ENCODE measurements at regions of chr6 and their contacts with region 1.

Region 1: GRCh38 chr6:1987640-1988039 is 257.8 kb downstream of the GMDS start:
- DNase-seq: peak; percentile 32
- H3K4me3 ChIP-seq: no peak overlapping the region
- H3K27ac ChIP-seq: no peak overlapping the region
- H3K27me3 ChIP-seq: no peaks in the 10 kb centered on the region
- CTCF ChIP-seq: no peak

Region 2: DNA sequence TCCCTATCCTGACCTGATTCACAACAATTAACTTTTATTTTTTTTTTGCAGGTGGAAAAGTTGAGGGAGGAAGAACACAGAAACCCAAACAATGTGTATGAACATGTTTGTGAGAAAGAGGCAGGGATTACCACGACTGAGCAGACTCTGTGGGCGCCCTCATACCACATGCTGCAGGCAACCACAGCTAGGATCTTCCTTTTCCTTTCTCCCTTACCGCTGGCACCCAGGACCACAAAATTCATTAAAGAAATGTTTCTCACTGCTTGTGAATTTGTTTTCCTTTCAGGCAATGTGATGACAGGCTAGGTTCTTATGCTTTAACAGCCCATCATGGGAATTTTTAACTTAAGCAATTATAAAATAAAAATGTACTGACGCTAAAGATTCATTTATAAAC is 29.4 kb before region 1 on chr6:
- CTCF ChIA-PET with region 1: interaction called, 13 read pairs
- POLR2A ChIA-PET with region 1: no interaction called
- DNase-seq: no peak
- H3K4me3 ChIP-seq: no peak overlapping the region
- H3K27ac ChIP-seq: no peak overlapping the region
- H3K27me3 ChIP-seq: no peaks in the 10 kb centered on the region
- CTCF ChIP-seq: no peak

Region 3: DNA sequence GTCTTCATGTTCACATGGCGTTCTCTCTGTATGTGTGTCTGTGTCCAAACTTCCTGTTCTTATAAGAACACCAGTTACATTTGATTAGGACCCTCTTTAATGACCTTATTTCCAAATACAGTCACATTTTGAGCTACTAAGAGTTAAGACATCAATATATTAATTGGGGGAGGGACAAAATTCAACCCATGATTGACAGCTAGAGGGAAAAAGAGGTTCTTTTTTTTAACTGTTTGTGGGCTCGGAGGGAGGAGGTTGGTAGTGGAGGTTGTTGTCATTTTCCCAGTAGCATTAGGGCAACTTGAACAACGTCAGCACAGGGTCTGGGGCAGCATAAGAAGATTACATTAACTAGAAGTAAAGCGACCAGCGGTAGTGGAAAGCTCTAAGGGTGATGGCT is 260.0 kb after region 1 on chr6:
- CTCF ChIA-PET with region 1: no interaction called
- POLR2A ChIA-PET with region 1: interaction called, 13 read pairs
- DNase-seq: no peak
- H3K4me3 ChIP-seq: no peak overlapping the region
- H3K27ac ChIP-seq: no peak overlapping the region
- H3K27me3 ChIP-seq: no peaks in the 10 kb centered on the region
- CTCF ChIP-seq: no peak